ENCODE measurements at regions of chr10 and their contacts with region 1.

Region 1: GRCh38 chr10:103888113-103888841 is 29.7 kb downstream of the STN1 start:
- DNase-seq: peak; percentile 72 to 77
- ATAC-seq: peak; percentile 58 to 72; a peak in 5 of 6 replicates
- H3K4me3 ChIP-seq: no peak overlapping the region
- H3K27ac ChIP-seq: peak overlapping the region; percentile 73 to 90
- H3K4me1 ChIP-seq: peaks cover 41% of the 10 kb centered on the region
- CTCF ChIP-seq: peak; percentile 95
- EP300 ChIP-seq: no peak
- POLR2A ChIP-seq: no peak
- RAD21 ChIP-seq: peak; percentile 92 to 93

Region 2: GRCh38 chr10:103720328-103720963 is 167.8 kb before region 1 on chr10:
- CTCF ChIA-PET with region 1: interaction called, 321 read pairs
- POLR2A ChIA-PET with region 1: no interaction called
- DNase-seq: no peak
- ATAC-seq: no peak
- H3K4me3 ChIP-seq: no peak overlapping the region
- H3K27ac ChIP-seq: no peak overlapping the region
- H3K4me1 ChIP-seq: peaks cover 11% of the 10 kb centered on the region; the same call in 2 of the 3 replicates
- CTCF ChIP-seq: no peak
- EP300 ChIP-seq: no peak
- POLR2A ChIP-seq: no peak
- RAD21 ChIP-seq: no peak

Region 3: GRCh38 chr10:103859161-103860086 is 28.9 kb before region 1 on chr10:
- CTCF ChIA-PET with region 1: interaction called, 25 read pairs
- POLR2A ChIA-PET with region 1: no interaction called
- DNase-seq: peak; percentile 68 to 69
- ATAC-seq: peak; percentile 75 to 89
- H3K4me3 ChIP-seq: no peak overlapping the region
- H3K27ac ChIP-seq: peak overlapping the region in 1 of 2 experiments; percentile 56; a peak in 3 of 6 replicates
- H3K4me1 ChIP-seq: peaks cover 29% of the 10 kb centered on the region
- CTCF ChIP-seq: peak; percentile 80
- EP300 ChIP-seq: no peak
- POLR2A ChIP-seq: no peak
- RAD21 ChIP-seq: peak; percentile 79 to 89

Region 4: DNA sequence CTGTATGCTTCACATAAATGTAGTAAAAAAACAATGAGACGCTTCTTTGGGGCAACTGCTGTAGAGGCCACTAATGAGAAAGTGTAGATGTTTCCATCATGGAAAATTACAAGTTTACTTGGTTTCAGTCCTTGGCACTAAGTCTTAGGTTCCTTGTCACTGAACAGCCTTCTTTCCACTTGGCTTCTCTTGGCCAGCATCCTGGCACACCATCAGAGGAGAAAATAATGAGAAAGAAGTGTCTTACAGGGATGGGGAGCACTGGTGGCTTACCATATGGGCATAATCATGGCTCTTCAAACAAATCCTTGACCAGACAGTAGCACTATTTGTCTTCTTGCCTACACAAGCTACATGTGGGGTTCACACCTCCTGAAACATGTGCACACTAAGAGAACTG is 10.4 kb before region 1 on chr10:
- CTCF ChIA-PET with region 1: interaction called, 32 read pairs
- POLR2A ChIA-PET with region 1: no interaction called
- DNase-seq: no peak
- ATAC-seq: no peak
- H3K4me3 ChIP-seq: no peak overlapping the region
- H3K27ac ChIP-seq: no peak overlapping the region
- H3K4me1 ChIP-seq: no peaks in the 10 kb centered on the region
- CTCF ChIP-seq: no peak
- EP300 ChIP-seq: no peak
- POLR2A ChIP-seq: no peak
- RAD21 ChIP-seq: no peak

Region 5: DNA sequence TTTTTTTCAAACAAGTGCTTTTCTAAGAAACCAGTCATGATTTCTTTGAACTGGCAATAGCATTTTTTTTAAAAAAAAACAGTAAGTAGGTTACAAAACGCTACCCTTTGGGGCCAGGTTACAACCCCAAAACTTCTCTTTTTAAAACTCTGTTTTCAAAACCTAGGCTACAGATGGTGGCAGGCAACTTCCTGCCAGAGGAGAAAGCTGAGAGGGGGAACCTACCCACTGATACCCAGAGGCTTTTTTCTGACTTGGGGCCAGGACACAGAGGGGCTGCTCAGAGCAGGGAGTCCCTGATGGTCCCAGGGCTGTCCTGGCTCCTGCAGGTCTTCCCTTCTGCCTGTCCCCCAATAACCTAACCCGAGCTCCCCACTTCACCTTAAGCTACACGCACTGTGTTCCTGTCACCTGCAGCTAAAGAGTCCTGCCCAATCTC is 22.8 kb after region 1 on chr10:
- CTCF ChIA-PET with region 1: interaction called, 11 read pairs
- POLR2A ChIA-PET with region 1: interaction called, 11 read pairs
- DNase-seq: no peak
- ATAC-seq: no peak
- H3K4me3 ChIP-seq: no peak overlapping the region
- H3K27ac ChIP-seq: peak overlapping the region; percentile 50 to 77
- H3K4me1 ChIP-seq: peaks cover 46% of the 10 kb centered on the region
- CTCF ChIP-seq: no peak
- EP300 ChIP-seq: no peak
- POLR2A ChIP-seq: no peak
- RAD21 ChIP-seq: no peak

Region 6: DNA sequence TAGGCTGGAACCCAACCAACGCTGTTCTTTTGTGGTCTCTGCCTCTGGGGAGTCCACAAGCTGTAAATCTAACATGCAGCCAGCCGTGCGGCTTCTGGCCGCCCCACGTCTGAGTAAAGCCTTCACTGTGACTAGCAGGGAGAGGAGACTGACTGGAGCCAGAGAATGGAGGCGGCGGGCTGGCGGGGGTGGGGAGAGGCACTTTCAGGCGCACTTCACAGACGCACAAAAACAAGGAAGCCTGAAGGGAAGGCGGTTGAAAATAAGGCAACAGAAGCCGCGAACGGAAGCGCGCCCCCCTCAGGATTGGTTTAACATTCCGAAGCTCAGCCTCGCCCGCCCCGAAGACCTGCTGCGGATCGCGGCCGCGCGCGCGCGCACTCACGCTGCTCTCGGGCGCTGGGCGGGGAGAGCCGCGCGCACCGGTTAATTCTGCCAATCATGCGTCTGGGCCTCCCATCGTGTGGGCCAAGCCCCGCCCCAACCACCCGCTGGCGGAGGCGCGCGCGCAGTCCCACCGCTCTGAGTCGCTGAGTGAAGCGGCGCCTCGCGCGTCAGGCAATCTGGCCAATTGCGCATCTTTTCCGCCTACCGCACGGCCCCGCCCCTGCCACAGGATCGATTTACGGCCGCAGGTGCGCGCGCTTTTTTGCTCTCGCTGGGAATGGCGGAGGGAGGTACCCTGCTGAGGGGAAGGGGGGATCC is 233.4 kb after region 1 on chr10 and contains the start of gene SFR1:
- CTCF ChIA-PET with region 1: interaction called, 31 read pairs
- POLR2A ChIA-PET with region 1: interaction called, 12 read pairs
- DNase-seq: peak; percentile 87 to 99
- ATAC-seq: peak; percentile 82 to 88
- H3K4me3 ChIP-seq: peak within 1 kb of the TSS; percentile 88
- H3K27ac ChIP-seq: peak within 1 kb of the TSS; percentile 98
- H3K4me1 ChIP-seq: peaks cover 51% of the 10 kb centered on the region
- CTCF ChIP-seq: peak; percentile 69
- EP300 ChIP-seq: no peak
- POLR2A ChIP-seq: peak; percentile 84
- RAD21 ChIP-seq: peak; percentile 67 to 83
- polyA plus RNA-seq, gene SFR1: 11.2 and 17.6 TPM in 2 replicates